Heart left ventricle (tissue), 16 donors: ENCODE measurements at regions of chr3 and their contacts with region 1.

Region 1: GRCh38 chr3:136898954-136899353 is 36.9 kb downstream of the NCK1 start:
- DNase-seq: no peak
- ATAC-seq: peak in 1 of 4 donors; percentile 38
- H3K4me3 ChIP-seq: no peak overlapping the region
- H3K27ac ChIP-seq: peak overlapping the region in 2 of 12 donors; percentile 6 to 10
- H3K4me1 ChIP-seq: peaks cover 0 to 71% (median 19%) of the 10 kb centered on the region in 12 donors
- H3K27me3 ChIP-seq: no peaks in the 10 kb centered on the region
- CTCF ChIP-seq: no peak
- POLR2A ChIP-seq: no peak

Region 2: GRCh38 chr3:136929984-136930670 is 31.2 kb after region 1 on chr3:
- intact Hi-C with region 1: loop called in 1 of 10 experiments (anchors 1 kb)
- DNase-seq: peak in 4 of 5 donors; percentile 47 to 68 (median 63)
- ATAC-seq: peak; percentile 67 to 85 (median 78)
- H3K4me3 ChIP-seq: peak overlapping the region in 11 of 12 donors; percentile 8 to 57 (median 40)
- H3K27ac ChIP-seq: peak overlapping the region in 11 of 12 donors; percentile 12 to 73 (median 54)
- H3K4me1 ChIP-seq: peaks cover 0 to 58% (median 18%) of the 10 kb centered on the region in 12 donors
- H3K27me3 ChIP-seq: no peaks in the 10 kb centered on the region
- CTCF ChIP-seq: no peak
- POLR2A ChIP-seq: no peak